AG04450 (cell line): ENCODE measurements at regions of chr19 and their contacts with region 1.

Region 1: GRCh38 chr19:18469069-18469846 is 31.3 kb upstream of the ISYNA1 start:
- DNase-seq: no peak
- H3K4me3 ChIP-seq: no peak overlapping the region
- H3K27ac ChIP-seq: no peak overlapping the region
- H3K27me3 ChIP-seq: no peaks in the 10 kb centered on the region
- CTCF ChIP-seq: peak; percentile 78

Region 2: DNA sequence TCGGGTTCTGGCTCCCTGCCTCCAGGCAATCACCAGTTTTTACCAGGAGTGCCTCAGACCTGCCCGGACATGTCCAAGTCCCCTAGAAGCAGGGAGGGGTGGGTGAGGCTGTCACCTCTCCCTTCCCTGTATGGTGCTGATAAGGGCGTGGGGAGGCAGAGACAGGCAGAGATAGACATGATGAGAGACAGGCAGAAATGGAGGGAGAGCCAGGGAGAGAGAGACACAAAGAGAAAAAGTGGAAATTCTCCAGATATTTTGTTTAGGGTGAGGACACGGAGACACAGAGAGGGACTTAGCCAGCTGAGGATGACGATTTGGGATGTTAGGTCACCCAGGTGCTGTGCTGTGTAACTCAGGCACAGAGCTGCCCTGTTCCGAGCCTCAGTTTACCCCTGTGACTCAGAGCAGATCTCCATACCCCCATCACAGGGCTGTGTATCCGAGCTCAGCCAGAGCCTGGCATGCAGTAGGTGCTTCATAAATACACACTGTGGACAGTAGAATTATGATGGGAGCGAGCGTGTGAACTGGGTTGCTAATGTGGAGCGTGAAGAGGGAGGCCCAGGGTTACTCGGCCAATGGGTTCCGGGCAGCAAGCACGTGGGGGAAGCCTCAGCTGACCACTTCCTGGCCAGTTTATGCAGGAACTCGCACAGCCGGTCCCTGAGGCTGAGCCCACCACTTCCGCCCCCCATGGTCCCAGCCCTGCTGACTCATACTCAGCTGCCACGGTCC is 95.2 kb before region 1 on chr19:
- CTCF ChIA-PET with region 1: no interaction called
- POLR2A ChIA-PET with region 1: no interaction called
- DNase-seq: peak; percentile 96
- H3K4me3 ChIP-seq: no peak overlapping the region
- H3K27ac ChIP-seq: peak overlapping the region; percentile 96
- H3K27me3 ChIP-seq: no peaks in the 10 kb centered on the region
- CTCF ChIP-seq: no peak

Region 3: GRCh38 chr19:18496167-18496979 is 27.1 kb after region 1 on chr19:
- CTCF ChIA-PET with region 1: interaction called, 12 read pairs
- POLR2A ChIA-PET with region 1: interaction called, 4 read pairs
- DNase-seq: no peak
- H3K4me3 ChIP-seq: no peak overlapping the region
- H3K27ac ChIP-seq: peak overlapping the region; percentile 65
- H3K27me3 ChIP-seq: no peaks in the 10 kb centered on the region
- CTCF ChIP-seq: no peak